Activated CD4-positive, alpha-beta memory T cell treated with anti-CD3 and anti-CD28 coated beads, Interleukin-2, amount 10 ng/mL, durations not matched to agents 7 days and 5 days (primary cell): ENCODE measurements at regions of chr7 and their contacts with region 1.

Region 1: DNA sequence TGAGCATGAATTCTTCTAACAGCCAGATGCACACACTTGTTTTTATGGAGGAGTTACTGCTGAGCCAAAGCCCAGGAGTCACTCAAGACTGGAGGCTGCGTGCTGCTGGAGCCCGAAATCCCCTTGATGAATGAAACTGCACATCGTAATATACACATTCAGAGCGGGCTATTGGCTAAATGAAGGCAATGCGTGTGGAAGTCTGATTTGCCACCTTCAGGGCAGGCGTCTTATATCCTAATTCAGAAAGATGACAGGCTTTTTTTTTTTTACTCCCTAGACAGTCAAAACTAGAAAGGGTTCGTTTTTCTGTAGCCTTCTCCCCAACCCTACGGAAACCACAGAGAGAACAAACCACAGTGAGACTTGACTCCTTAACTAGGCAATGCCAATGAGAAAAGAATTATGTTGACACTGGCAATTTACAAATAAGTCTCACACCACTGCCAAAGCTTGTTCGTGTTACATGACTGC is 227.2 kb upstream of the KLF14 start:
- DNase-seq: peak; percentile 86
- H3K4me3 Mint-ChIP-seq: peak overlapping the region; percentile 93
- H3K27ac Mint-ChIP-seq: peak overlapping the region; percentile 100
- H3K4me1 Mint-ChIP-seq: peaks cover 54% of the 10 kb centered on the region
- H3K27me3 Mint-ChIP-seq: no peaks in the 10 kb centered on the region

Region 2: GRCh38 chr7:130777426-130777825 is 183.7 kb before region 1 on chr7:
- CTCF ChIA-PET with region 1: no interaction called
- POLR2A ChIA-PET with region 1: no interaction called
- DNase-seq: no peak
- H3K4me3 Mint-ChIP-seq: no peak overlapping the region
- H3K27ac Mint-ChIP-seq: no peak overlapping the region
- H3K4me1 Mint-ChIP-seq: no peaks in the 10 kb centered on the region
- H3K27me3 Mint-ChIP-seq: peaks cover 37% of the 10 kb centered on the region

Region 3: GRCh38 chr7:130912862-130913631 is 48.1 kb before region 1 on chr7:
- CTCF ChIA-PET with region 1: interaction called, 30 read pairs
- POLR2A ChIA-PET with region 1: no interaction called
- DNase-seq: peak; percentile 87
- H3K4me3 Mint-ChIP-seq: peak overlapping the region; percentile 84
- H3K27ac Mint-ChIP-seq: peak overlapping the region; percentile 97
- H3K4me1 Mint-ChIP-seq: peaks cover 92% of the 10 kb centered on the region
- H3K27me3 Mint-ChIP-seq: no peaks in the 10 kb centered on the region

Region 4: GRCh38 chr7:130941322-130942210 is 19.6 kb before region 1 on chr7:
- CTCF ChIA-PET with region 1: interaction called, 64 read pairs
- POLR2A ChIA-PET with region 1: interaction called, 322 read pairs
- DNase-seq: no peak
- H3K4me3 Mint-ChIP-seq: peak overlapping the region; percentile 80
- H3K27ac Mint-ChIP-seq: peak overlapping the region; percentile 89
- H3K4me1 Mint-ChIP-seq: peaks cover 89% of the 10 kb centered on the region
- H3K27me3 Mint-ChIP-seq: no peaks in the 10 kb centered on the region

Region 5: GRCh38 chr7:130988443-130988842 is 27.3 kb after region 1 on chr7:
- CTCF ChIA-PET with region 1: interaction called, 33 read pairs
- POLR2A ChIA-PET with region 1: interaction called, 74 read pairs
- DNase-seq: no peak
- H3K4me3 Mint-ChIP-seq: no peak overlapping the region
- H3K27ac Mint-ChIP-seq: peak overlapping the region; percentile 77
- H3K4me1 Mint-ChIP-seq: peaks cover 80% of the 10 kb centered on the region
- H3K27me3 Mint-ChIP-seq: no peaks in the 10 kb centered on the region

Region 6: GRCh38 chr7:131007394-131008330 is 46.5 kb after region 1 on chr7:
- CTCF ChIA-PET with region 1: interaction called, 11 read pairs
- POLR2A ChIA-PET with region 1: interaction called, 127 read pairs
- DNase-seq: peak; percentile 72
- H3K4me3 Mint-ChIP-seq: peak overlapping the region; percentile 41
- H3K27ac Mint-ChIP-seq: peak overlapping the region; percentile 81
- H3K4me1 Mint-ChIP-seq: peaks cover 80% of the 10 kb centered on the region
- H3K27me3 Mint-ChIP-seq: no peaks in the 10 kb centered on the region

Region 7: GRCh38 chr7:131040467-131040932 is 79.3 kb after region 1 on chr7:
- CTCF ChIA-PET with region 1: interaction called, 35 read pairs
- POLR2A ChIA-PET with region 1: interaction called, 17 read pairs
- DNase-seq: peak; percentile 52
- H3K4me3 Mint-ChIP-seq: no peak overlapping the region
- H3K27ac Mint-ChIP-seq: no peak overlapping the region
- H3K4me1 Mint-ChIP-seq: peaks cover 47% of the 10 kb centered on the region
- H3K27me3 Mint-ChIP-seq: no peaks in the 10 kb centered on the region

Region 8: GRCh38 chr7:131076032-131076431 is 114.9 kb after region 1 on chr7:
- CTCF ChIA-PET with region 1: no interaction called
- POLR2A ChIA-PET with region 1: no interaction called
- DNase-seq: no peak
- H3K4me3 Mint-ChIP-seq: no peak overlapping the region
- H3K27ac Mint-ChIP-seq: no peak overlapping the region
- H3K4me1 Mint-ChIP-seq: peaks cover 35% of the 10 kb centered on the region
- H3K27me3 Mint-ChIP-seq: no peaks in the 10 kb centered on the region